Natural killer cell (primary cell): ENCODE measurements at regions of chr3 and their contacts with region 1.

Region 1: GRCh38 chr3:11643605-11644087 is at the start of gene VGLL4:
- DNase-seq: peak; percentile 54 to 77
- ATAC-seq: peak; percentile 39 to 53 (median 42)
- H3K4me3 ChIP-seq: peak within 1 kb of the TSS; percentile 74
- H3K4me3 Mint-ChIP-seq: peak within 1 kb of the TSS; percentile 100
- H3K27ac ChIP-seq: peak within 1 kb of the TSS; percentile 95
- H3K27ac Mint-ChIP-seq: peak within 1 kb of the TSS; percentile 98 to 100
- H3K4me1 ChIP-seq: peaks cover 23% of the 10 kb centered on the region
- H3K4me1 Mint-ChIP-seq: peaks cover 50 to 54% of the 10 kb centered on the region in 2 donors
- H3K27me3 ChIP-seq: no peaks in the 10 kb centered on the region
- H3K27me3 Mint-ChIP-seq: no peaks in the 10 kb centered on the region
- CTCF ChIP-seq: no peak
- total RNA-seq, gene VGLL4: 29.5 to 42.8 (median 34.6) TPM

Region 2: DNA sequence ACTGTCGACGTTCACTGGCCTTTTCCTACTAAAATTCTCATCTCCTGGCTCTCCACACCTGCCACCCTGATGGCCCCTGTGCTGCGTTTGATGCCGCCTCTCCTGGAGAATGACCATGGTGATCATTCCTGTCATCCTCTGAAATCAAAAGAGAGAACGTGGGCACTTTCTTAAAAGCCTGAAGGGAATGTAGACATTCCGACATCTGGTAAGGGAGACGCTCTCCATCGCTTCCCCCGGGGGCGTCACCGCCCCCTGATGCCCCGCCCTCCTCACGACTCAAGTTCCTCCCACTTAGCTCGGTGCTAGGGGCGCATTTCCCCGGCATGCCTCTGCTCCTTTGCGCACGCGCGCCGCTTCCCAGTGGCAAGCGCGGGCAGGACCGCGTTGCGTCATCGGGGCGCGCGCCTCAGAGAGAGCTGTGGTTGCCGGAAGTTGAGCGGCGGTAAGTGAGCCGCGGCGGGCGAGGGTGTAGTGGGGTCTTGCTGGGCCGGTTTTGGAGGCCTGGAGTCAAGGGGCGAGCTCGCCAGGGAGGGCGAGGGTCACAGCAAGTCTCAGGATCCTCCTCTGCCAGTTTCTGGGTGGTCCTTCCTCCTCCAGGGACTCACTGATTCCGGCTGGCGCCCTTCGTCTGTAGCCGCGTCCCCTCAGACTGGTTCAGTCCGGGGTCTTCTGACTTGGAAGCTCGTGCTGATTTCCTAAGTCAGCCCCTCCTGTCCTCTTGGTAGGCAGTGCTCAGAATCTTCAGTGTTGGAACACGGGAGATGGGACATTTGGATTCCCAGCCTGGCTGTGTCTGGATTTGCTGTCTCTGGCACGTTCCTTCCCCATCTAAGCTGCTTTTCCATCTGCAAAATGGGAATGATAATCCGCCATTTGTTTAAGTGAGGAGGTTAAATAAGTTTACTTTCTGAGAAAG is 371.4 kb before region 1 on chr3 and contains the start of gene ATG7:
- intact Hi-C with region 1: loop called (anchors 5 kb)
- DNase-seq: peak; percentile 98 to 99
- ATAC-seq: peak; percentile 93 to 97 (median 93)
- H3K4me3 ChIP-seq: peak within 1 kb of the TSS; percentile 87
- H3K4me3 Mint-ChIP-seq: peak within 1 kb of the TSS; percentile 96
- H3K27ac ChIP-seq: peak within 1 kb of the TSS; percentile 91
- H3K27ac Mint-ChIP-seq: peak within 1 kb of the TSS; percentile 97
- H3K4me1 ChIP-seq: peaks cover 23% of the 10 kb centered on the region
- H3K4me1 Mint-ChIP-seq: peaks cover 31 to 48% of the 10 kb centered on the region in 2 donors
- H3K27me3 ChIP-seq: no peaks in the 10 kb centered on the region
- H3K27me3 Mint-ChIP-seq: peaks cover 3 to 4% of the 10 kb centered on the region in 2 donors
- CTCF ChIP-seq: no peak
- total RNA-seq, gene ATG7: 55.3 to 72.9 (median 68.6) TPM

Region 3: DNA sequence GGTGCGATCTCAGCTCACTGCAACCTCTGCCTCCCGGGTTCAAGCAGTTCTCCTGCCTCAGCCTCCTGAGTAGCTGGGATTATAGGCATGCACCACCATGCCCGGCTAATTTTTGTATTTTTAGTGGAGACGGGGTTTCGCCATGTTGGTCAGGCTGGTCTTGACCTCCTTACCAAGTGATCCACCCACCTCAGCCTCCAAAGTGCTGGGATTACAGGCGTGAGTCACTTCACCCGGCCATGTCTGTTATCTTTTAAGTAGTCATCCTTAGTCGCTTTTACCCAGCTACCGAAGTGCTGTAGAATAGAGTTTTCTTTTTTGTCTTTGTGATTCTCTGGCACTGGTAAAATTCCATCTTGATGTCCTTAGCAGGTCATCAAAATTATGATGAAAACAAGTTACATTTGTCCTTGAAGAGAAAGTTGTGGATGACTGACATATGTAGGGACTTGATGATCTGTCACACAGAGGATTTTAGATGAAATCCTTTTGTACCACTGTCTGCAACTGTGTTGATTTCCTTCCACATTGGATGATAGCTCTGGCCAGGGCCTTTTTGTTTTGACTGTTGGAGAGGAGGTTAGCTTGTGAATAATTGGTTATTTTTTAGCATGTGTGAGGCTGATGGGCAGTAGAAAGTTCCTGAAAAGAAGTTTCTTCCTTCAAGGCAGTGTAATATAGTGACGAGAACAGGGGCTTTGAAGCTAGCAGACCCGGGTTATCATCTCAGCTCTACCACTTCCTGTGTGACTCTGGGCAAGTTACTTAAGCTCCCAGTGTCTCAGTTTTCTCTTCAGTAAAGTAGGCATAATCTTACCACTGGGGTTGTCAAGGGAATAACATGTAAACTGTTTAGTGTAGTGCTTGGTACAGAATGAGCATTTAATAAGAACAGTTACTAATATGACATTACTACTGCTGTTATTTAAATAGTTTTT is 352.6 kb before region 1 on chr3:
- intact Hi-C with region 1: loop called (anchors 5 kb)
- DNase-seq: peak; percentile 34 to 77
- ATAC-seq: peak; percentile 83 to 93 (median 92)
- H3K4me3 ChIP-seq: no peak overlapping the region
- H3K4me3 Mint-ChIP-seq: peak overlapping the region; percentile 74
- H3K27ac ChIP-seq: peak overlapping the region; percentile 89
- H3K27ac Mint-ChIP-seq: peak overlapping the region; percentile 94
- H3K4me1 ChIP-seq: peaks cover 36% of the 10 kb centered on the region
- H3K4me1 Mint-ChIP-seq: peaks cover 57 to 61% of the 10 kb centered on the region in 2 donors
- H3K27me3 ChIP-seq: no peaks in the 10 kb centered on the region
- H3K27me3 Mint-ChIP-seq: no peaks in the 10 kb centered on the region
- CTCF ChIP-seq: no peak

Region 4: GRCh38 chr3:11610044-11610671 is 33.5 kb before region 1 on chr3:
- intact Hi-C with region 1: loop called (anchors 2 kb)
- DNase-seq: peak in 1 of 2 donors; percentile 49
- ATAC-seq: peak; percentile 58 to 91 (median 84)
- H3K4me3 ChIP-seq: no peak overlapping the region
- H3K4me3 Mint-ChIP-seq: peak overlapping the region; percentile 81
- H3K27ac ChIP-seq: no peak overlapping the region
- H3K27ac Mint-ChIP-seq: peak overlapping the region; percentile 87
- H3K4me1 ChIP-seq: peaks cover 23% of the 10 kb centered on the region
- H3K4me1 Mint-ChIP-seq: peaks cover 92 to 95% of the 10 kb centered on the region in 2 donors
- H3K27me3 ChIP-seq: no peaks in the 10 kb centered on the region
- H3K27me3 Mint-ChIP-seq: no peaks in the 10 kb centered on the region
- CTCF ChIP-seq: no peak

Region 5: DNA sequence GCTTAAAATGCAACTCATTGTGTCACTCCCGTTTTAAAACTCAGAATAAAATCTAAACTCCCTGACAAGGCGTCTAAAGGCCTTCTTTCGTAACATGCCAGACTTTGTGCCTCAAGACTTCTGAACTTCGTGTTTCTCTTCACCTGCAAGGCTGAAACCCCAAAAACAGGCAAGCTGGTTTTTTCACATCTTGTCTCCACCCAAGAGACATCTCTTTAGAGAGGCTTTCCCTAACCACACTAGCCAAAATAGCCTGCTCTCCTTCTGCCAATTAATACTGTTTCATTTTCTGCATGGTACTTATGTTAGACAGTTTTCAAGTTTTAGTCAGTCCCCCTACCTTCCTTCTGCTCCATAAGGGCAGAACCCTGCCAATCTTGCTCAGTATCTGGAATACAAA is 978.7 kb after region 1 on chr3:
- intact Hi-C with region 1: no loop called
- DNase-seq: no peak
- ATAC-seq: no peak
- H3K4me3 ChIP-seq: no peak overlapping the region
- H3K4me3 Mint-ChIP-seq: no peak overlapping the region
- H3K27ac ChIP-seq: no peak overlapping the region
- H3K27ac Mint-ChIP-seq: peak overlapping the region; percentile 60 to 73
- H3K4me1 ChIP-seq: peaks cover 11% of the 10 kb centered on the region
- H3K4me1 Mint-ChIP-seq: peaks cover 43 to 53% of the 10 kb centered on the region in 2 donors
- H3K27me3 ChIP-seq: no peaks in the 10 kb centered on the region
- H3K27me3 Mint-ChIP-seq: no peaks in the 10 kb centered on the region
- CTCF ChIP-seq: no peak